IMR-90 (cell line): ENCODE measurements at regions of chr18 and their contacts with region 1.

Region 1: DNA sequence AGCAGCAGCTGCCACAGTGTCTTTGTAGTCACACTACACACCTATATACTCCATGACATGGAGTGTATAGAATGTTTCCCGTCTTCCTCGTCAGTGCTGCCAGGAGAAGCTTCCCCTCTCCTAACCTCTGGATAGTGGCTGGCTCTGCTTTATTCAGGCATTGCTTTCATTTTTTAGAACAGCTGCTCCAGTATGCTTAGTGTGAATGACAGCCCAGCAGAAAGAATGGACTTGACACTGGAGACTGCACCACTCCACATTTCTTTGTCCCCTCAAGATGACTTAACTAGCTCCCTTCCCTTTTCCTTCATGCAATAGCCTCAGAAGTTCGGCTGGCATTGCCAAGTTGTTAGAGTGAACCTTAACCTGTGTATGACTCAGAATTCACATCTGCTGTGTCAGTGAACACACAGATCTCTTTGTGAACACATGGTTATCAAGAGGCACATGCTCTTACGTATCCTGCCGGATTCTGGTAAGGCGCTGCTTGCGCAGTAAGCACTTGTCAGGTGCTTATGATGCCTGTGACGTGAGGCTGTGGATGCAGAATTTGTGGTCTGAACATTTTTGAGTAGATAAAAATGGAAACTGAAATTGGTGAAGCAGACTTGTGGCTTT is 73.9 kb downstream of the NEDD4L start:
- DNase-seq: peak; percentile 98
- ATAC-seq: peak; percentile 79
- H3K4me3 ChIP-seq: no peak overlapping the region
- H3K27ac ChIP-seq: no peak overlapping the region
- H3K4me1 ChIP-seq: peaks cover 8% of the 10 kb centered on the region
- H3K27me3 ChIP-seq: no peaks in the 10 kb centered on the region
- CTCF ChIP-seq: no peak
- POLR2A ChIP-seq: no peak
- RAD21 ChIP-seq: no peak

Region 2: GRCh38 chr18:57959278-57959677 is 158.6 kb before region 1 on chr18:
- CTCF ChIA-PET with region 1: interaction called, 5 read pairs
- POLR2A ChIA-PET with region 1: no interaction called
- dilution Hi-C with region 1: no loop called
- in situ Hi-C with region 1: no loop called
- intact Hi-C with region 1: loop called (anchors 1 kb)
- DNase-seq: peak; percentile 62
- ATAC-seq: peak; percentile 85
- H3K4me3 ChIP-seq: no peak overlapping the region
- H3K27ac ChIP-seq: no peak overlapping the region
- H3K4me1 ChIP-seq: no peaks in the 10 kb centered on the region
- H3K27me3 ChIP-seq: peaks cover 16% of the 10 kb centered on the region
- CTCF ChIP-seq: peak; percentile 44
- POLR2A ChIP-seq: no peak
- RAD21 ChIP-seq: peak; percentile 48

Region 3: GRCh38 chr18:58054041-58054781 is 63.7 kb before region 1 on chr18:
- CTCF ChIA-PET with region 1: no interaction called
- POLR2A ChIA-PET with region 1: no interaction called
- dilution Hi-C with region 1: no loop called
- in situ Hi-C with region 1: no loop called
- intact Hi-C with region 1: loop called (anchors 2 kb)
- DNase-seq: peak; percentile 60
- ATAC-seq: peak; percentile 82
- H3K4me3 ChIP-seq: peak overlapping the region; percentile 19; the same call in 1 of the 2 replicates
- H3K27ac ChIP-seq: peak overlapping the region; percentile 58; the same call in 1 of the 2 replicates
- H3K4me1 ChIP-seq: peaks cover 10% of the 10 kb centered on the region
- H3K27me3 ChIP-seq: no peaks in the 10 kb centered on the region
- CTCF ChIP-seq: no peak
- POLR2A ChIP-seq: no peak
- RAD21 ChIP-seq: no peak

Region 4: DNA sequence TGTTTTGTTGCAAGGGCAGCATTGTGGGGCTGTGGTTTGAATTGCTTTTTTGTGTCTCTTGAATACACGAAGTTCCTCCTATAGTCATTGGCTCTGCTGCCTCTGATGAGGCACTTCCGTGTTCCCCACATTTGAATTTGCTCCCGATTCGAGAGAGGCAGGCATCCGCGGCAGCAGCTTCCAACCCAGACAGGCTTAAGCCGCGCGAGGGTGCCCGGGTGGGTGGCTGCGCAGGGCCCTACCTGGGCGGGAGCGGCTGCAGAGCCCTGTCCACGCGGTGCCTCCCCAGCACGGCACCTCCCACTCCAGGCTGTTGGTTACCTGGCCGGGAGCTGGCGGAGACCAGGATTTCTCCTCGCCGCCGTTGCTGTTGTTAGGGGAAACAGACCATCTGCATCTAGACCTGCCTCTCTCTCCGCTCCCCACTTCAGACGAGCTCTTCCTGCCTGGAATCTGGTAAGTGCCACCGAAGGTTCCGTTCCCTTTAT is 77.4 kb after region 1 on chr18:
- CTCF ChIA-PET with region 1: no interaction called
- POLR2A ChIA-PET with region 1: no interaction called
- dilution Hi-C with region 1: no loop called
- in situ Hi-C with region 1: no loop called
- intact Hi-C with region 1: no loop called
- DNase-seq: no peak
- ATAC-seq: no peak
- H3K4me3 ChIP-seq: no peak overlapping the region
- H3K27ac ChIP-seq: no peak overlapping the region
- H3K4me1 ChIP-seq: peaks cover 7% of the 10 kb centered on the region
- H3K27me3 ChIP-seq: no peaks in the 10 kb centered on the region
- CTCF ChIP-seq: no peak
- POLR2A ChIP-seq: no peak
- RAD21 ChIP-seq: no peak

Region 5: DNA sequence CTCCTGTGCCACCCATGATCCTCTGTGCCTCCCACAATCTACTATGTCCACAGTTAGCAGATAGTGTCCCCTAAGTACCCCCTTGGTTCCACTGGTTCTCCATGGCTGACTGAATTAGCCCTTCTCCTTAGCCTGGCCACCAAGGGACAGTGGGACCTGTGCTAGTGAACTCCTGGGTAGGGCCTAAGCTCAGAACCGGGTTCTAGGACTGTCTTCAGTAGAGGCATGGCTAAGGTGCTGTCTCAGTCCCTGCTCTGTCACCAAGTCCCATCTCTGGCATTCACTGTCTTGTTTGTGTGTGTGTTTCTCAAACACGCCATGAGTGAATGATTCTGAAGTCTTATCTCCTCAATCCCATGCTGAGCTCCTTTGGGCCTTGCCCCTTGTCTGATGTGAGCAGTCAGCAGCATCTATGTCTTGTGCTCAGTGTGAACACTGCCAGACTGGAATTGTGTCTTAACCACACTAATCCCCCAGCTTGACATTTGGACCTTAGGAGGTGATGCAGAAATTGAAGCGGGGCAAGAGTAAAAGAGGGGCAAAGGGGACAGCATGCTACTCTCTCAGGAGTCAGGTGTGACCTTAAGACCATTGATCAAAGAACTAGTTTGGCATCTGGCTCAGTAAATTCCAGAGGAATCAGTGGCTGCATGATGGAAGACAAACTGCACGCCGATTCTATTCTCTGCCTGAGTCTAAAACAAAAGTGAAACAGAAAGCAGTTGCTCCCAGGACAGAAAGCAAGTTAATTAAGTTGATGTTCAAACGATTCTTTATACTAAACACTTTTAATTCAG is 320.5 kb after region 1 on chr18:
- CTCF ChIA-PET with region 1: no interaction called
- POLR2A ChIA-PET with region 1: no interaction called
- dilution Hi-C with region 1: no loop called
- in situ Hi-C with region 1: no loop called
- intact Hi-C with region 1: no loop called
- DNase-seq: peak; percentile 41
- ATAC-seq: peak; percentile 84
- H3K4me3 ChIP-seq: peak overlapping the region; percentile 43
- H3K27ac ChIP-seq: no peak overlapping the region
- H3K4me1 ChIP-seq: peaks cover 5% of the 10 kb centered on the region
- H3K27me3 ChIP-seq: peaks cover 6% of the 10 kb centered on the region; the same call in 1 of the 2 replicates
- CTCF ChIP-seq: no peak
- POLR2A ChIP-seq: no peak
- RAD21 ChIP-seq: no peak

Region 6: GRCh38 chr18:58694720-58695468 is 577.0 kb after region 1 on chr18:
- CTCF ChIA-PET with region 1: no interaction called
- POLR2A ChIA-PET with region 1: no interaction called
- dilution Hi-C with region 1: no loop called
- in situ Hi-C with region 1: no loop called
- intact Hi-C with region 1: no loop called
- DNase-seq: no peak
- ATAC-seq: no peak
- H3K4me3 ChIP-seq: no peak overlapping the region
- H3K27ac ChIP-seq: no peak overlapping the region
- H3K4me1 ChIP-seq: no peaks in the 10 kb centered on the region
- H3K27me3 ChIP-seq: no peaks in the 10 kb centered on the region
- CTCF ChIP-seq: no peak
- POLR2A ChIP-seq: no peak
- RAD21 ChIP-seq: no peak

Region 7: DNA sequence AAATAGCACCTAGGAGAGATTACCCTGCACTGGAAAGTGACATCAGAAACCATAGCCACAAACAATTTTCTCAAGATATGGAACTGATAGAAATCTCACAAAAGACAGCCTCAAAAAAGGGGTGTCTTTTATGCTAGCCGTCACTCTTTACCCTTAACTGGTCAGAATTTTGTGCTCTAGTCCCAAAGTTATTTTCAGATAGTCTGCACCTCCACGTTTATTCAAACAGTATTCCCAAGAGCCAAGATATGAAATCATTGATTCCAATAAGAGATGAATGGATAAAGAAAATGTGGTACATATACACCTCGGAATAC is 1758.4 kb after region 1 on chr18:
- CTCF ChIA-PET with region 1: no interaction called
- POLR2A ChIA-PET with region 1: no interaction called
- dilution Hi-C with region 1: no loop called
- in situ Hi-C with region 1: no loop called
- intact Hi-C with region 1: no loop called
- DNase-seq: no peak
- ATAC-seq: no peak
- H3K4me3 ChIP-seq: no peak overlapping the region
- H3K27ac ChIP-seq: no peak overlapping the region
- H3K4me1 ChIP-seq: peaks cover 7% of the 10 kb centered on the region
- H3K27me3 ChIP-seq: no peaks in the 10 kb centered on the region
- CTCF ChIP-seq: no peak
- POLR2A ChIP-seq: no peak
- RAD21 ChIP-seq: no peak